Tibial artery (tissue), 4 donors: ENCODE measurements at regions of chr9 and their contacts with region 1.

Region 1: DNA sequence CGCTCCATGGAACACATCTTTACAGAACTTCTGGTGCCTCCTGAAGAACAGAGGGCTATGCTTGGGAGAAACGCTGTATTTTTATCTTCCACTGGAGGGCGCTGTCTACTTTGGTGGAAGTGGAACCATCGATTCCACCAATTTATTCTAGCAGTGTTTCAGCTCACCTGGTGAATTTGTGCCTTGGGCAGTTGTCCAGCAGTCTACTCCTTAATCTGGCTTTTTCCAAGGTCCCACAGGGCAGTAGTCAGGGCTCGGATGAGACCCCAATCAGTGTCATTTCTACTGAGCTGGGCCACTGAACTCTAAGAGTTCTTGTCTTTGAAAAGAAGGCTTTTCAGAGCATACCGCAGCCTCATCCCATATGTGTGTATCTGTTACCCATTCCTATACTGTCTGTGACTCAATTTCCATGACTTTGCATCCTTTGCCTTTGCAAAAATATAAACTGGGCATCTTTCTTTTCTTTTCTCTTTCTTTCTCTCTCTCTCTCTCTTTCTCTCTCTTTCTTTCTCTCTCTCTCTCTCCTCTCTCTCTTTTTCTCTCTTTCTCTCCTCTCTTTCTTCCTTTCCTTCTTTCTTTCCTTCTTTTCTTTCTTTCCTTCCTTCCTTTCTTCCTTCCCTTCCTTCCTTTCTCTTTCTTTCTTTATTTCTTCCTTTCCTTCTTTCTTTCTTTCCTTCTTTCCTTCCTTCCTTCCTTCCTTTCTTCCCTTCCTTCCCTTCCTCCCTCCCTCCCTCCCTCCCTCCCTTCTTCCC is 138.4 kb upstream of the ZNF618 start:
- DNase-seq: peak in 1 of 2 donors; percentile 35
- H3K4me3 ChIP-seq: no peak overlapping the region
- H3K27ac ChIP-seq: no peak overlapping the region
- H3K4me1 ChIP-seq: peaks cover 0 to 4% (median 0%) of the 10 kb centered on the region in 4 donors
- H3K27me3 ChIP-seq: peaks cover 0 to 13% of the 10 kb centered on the region in 2 donors
- CTCF ChIP-seq: peak; percentile 79 to 81

Region 2: GRCh38 chr9:113255438-113255837 is 482.3 kb before region 1 on chr9:
- intact Hi-C with region 1: no loop called
- DNase-seq: no peak
- H3K4me3 ChIP-seq: no peak overlapping the region
- H3K27ac ChIP-seq: no peak overlapping the region
- H3K4me1 ChIP-seq: no peaks in the 10 kb centered on the region
- H3K27me3 ChIP-seq: no peaks in the 10 kb centered on the region
- CTCF ChIP-seq: no peak

Region 3: GRCh38 chr9:113876151-113876992 is 138.7 kb after region 1 on chr9 and contains the start of gene ZNF618:
- intact Hi-C with region 1: loop called (anchors 5 kb)
- DNase-seq: peak in 1 of 2 donors; percentile 71
- H3K4me3 ChIP-seq: peak within 1 kb of the TSS; percentile 87 to 96
- H3K27ac ChIP-seq: peak within 1 kb of the TSS; percentile 84 to 88
- H3K4me1 ChIP-seq: peaks cover 0 to 41% (median 14%) of the 10 kb centered on the region in 4 donors
- H3K27me3 ChIP-seq: no peaks in the 10 kb centered on the region
- CTCF ChIP-seq: peak; percentile 33 to 53

Region 4: GRCh38 chr9:114033397-114034103 is 295.9 kb after region 1 on chr9:
- intact Hi-C with region 1: loop called (anchors 5 kb)
- DNase-seq: peak in 1 of 2 donors; percentile 65
- H3K4me3 ChIP-seq: no peak overlapping the region
- H3K27ac ChIP-seq: no peak overlapping the region
- H3K4me1 ChIP-seq: peaks cover 0 to 22% (median 4%) of the 10 kb centered on the region in 4 donors
- H3K27me3 ChIP-seq: no peaks in the 10 kb centered on the region
- CTCF ChIP-seq: peak; percentile 52 to 58